ENCODE measurements at regions of chr16 and their contacts with region 1.

Region 1: GRCh38 chr16:5971106-5971505 is 873.5 kb upstream of the EEF2KMT start:
- DNase-seq: no peak
- H3K4me3 ChIP-seq: no peak overlapping the region
- H3K27ac ChIP-seq: no peak overlapping the region
- H3K4me1 ChIP-seq: no peaks in the 10 kb centered on the region
- H3K27me3 ChIP-seq: no peaks in the 10 kb centered on the region
- CTCF ChIP-seq: no peak
- POLR2A ChIP-seq: no peak

Region 2: DNA sequence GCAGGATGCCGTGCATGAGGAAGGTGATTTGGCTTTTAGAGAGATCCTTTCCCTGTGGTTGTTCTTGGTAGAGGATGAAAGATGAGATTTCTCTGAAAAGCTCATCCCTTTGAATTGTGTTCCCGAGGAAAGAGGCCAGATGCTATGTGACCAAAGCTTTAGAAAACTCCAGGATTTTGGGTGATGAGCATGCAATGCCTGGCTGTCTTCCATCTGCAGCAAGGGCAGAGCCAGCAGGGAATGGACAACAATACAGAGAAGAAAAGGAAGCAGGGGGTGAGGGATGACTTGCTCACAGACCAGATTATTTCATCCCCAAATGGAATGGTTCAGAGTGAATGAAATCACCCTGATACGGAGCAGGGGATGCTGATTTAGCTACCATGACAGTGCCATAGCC is 76.2 kb after region 1 on chr16:
- intact Hi-C with region 1: no loop called
- DNase-seq: no peak
- H3K4me3 ChIP-seq: no peak overlapping the region
- H3K27ac ChIP-seq: no peak overlapping the region
- H3K4me1 ChIP-seq: no peaks in the 10 kb centered on the region
- H3K27me3 ChIP-seq: no peaks in the 10 kb centered on the region
- CTCF ChIP-seq: no peak
- POLR2A ChIP-seq: no peak

Region 3: GRCh38 chr16:6143020-6143419 is 171.9 kb after region 1 on chr16:
- intact Hi-C with region 1: loop called (anchors 5 kb)
- DNase-seq: no peak
- H3K4me3 ChIP-seq: no peak overlapping the region
- H3K27ac ChIP-seq: no peak overlapping the region
- H3K4me1 ChIP-seq: no peaks in the 10 kb centered on the region
- H3K27me3 ChIP-seq: no peaks in the 10 kb centered on the region
- CTCF ChIP-seq: no peak
- POLR2A ChIP-seq: no peak

Measured in breast epithelium (tissue), 4 donors.